ENCODE measurements at regions of chr20 and their contacts with region 1.

Region 1: DNA sequence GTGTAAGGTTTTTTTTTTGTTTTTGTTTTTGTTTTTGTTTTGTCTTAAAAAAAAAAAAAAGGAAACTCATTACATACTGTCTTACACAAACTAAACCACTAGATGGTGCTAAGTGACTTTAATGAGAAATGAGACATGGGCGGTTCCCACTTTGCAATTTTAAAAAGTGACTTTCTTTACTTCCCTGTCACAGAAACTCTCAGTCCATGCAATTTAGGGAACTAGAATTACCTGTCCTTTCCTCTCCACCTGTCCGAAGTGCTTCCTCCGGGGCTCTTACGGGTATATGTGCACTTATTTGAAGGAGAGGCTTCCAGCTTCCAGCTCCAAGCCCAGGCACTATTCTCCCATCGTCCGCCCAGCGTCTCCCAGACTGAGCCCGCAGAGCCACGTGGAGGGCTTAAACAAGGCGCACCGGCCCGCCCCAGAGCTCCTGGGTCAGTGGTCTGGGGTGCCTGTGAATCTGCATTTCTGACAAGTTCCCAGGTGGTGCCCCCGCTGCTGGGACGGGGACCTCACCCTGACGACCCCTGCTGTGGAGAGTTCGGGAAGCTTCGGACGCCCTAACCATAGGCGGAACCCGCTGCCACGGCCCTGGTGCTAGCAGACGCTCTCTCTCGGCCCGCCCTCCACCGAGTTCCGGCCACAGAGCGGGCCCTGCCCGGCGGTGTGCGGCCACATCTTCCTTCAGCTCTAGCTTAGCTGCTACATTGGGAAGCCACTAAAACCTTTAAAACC is 26.1 kb downstream of the BFSP1 start:
- DNase-seq: no peak
- H3K4me3 ChIP-seq: peak overlapping the region; percentile 50
- H3K27me3 ChIP-seq: no peaks in the 10 kb centered on the region
- CTCF ChIP-seq: peak; percentile 54

Region 2: DNA sequence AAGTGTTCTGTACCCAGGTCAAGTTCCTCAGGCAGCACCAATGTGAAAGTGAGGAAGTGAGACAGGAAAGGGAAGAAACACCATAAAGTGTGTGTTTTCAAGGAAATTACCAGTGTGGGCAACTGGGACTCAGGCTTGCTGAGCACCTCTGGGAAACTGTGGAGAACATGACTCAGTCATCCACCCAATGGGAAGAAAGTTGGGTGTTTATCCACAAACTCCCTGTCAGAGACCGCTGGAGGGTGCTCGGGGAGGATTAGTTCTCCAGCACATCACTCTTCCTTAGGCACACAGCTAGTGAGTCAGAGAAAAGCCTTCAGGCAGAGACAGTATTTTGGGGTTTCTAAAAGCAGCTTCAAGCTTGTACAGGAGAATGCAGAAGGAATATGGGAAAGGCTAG is 184.6 kb before region 1 on chr20:
- CTCF ChIA-PET with region 1: no interaction called
- POLR2A ChIA-PET with region 1: no interaction called
- DNase-seq: no peak
- H3K4me3 ChIP-seq: no peak overlapping the region
- H3K27me3 ChIP-seq: no peaks in the 10 kb centered on the region
- CTCF ChIP-seq: no peak

Region 3: DNA sequence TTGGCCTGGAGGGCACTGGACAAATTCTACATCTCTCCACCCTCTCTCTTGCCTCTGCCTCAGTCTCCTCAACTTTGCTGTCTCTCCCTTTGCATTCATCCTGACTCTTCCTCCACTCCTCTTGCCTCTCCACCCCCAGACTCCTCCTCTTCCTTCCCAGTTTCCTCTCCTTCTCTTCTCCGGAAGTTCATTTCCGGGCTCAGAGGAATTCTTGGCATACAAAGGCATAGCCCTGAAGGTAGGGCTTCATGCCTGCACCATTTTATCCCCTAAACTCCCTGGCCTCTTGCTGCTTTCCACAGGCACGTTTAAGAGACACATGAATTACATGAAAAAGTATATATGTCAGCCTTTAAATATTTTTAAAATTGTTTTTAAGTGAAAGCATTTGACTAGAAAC is 15.5 kb after region 1 on chr20:
- CTCF ChIA-PET with region 1: interaction called, 12 read pairs
- POLR2A ChIA-PET with region 1: no interaction called
- DNase-seq: no peak
- H3K4me3 ChIP-seq: no peak overlapping the region
- H3K27me3 ChIP-seq: no peaks in the 10 kb centered on the region; the same call in 1 of the 2 replicates
- CTCF ChIP-seq: no peak

Region 4: DNA sequence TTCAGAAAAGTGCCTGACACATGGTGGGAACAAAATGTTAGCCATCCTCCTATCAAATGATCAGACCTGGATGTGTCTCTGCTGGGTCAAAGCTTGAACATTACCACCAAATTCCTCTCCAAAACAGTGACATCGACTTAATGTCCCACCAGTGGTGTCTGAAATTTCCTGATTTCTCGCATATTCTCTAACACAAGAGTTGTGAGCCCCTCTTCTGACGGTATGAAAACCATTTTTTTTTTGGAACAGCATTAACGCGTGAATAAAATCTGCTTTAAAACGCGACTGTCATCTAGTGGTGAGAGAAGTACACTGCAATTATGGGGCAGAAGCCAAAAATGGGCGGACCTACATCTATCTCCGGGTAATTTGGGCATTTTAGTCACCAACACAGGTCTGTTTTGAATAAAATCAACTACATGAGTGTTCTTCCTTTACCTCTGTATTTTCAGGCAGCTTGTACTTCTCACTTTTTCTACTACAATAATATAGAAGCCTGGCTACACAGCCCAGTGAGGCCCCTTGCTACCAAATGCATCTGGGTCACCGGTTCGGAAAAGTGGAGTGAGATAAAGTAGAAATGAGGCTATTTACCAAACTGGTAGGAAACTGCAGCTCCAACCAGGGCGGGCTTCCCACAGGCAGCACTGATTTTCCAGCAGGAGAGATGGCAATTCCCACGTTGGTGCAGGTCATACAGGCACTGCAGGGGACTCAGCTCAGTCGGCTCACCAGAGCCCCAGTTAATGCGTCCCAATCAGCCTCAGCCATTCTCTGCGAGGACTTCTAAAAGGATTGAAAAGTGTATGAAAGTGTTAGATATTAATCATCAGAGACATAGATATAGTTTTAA is 491.1 kb after region 1 on chr20:
- CTCF ChIA-PET with region 1: interaction called, 23 read pairs
- POLR2A ChIA-PET with region 1: no interaction called
- DNase-seq: peak; percentile 19
- H3K4me3 ChIP-seq: no peak overlapping the region
- H3K27me3 ChIP-seq: peaks cover 3% of the 10 kb centered on the region; the same call in 1 of the 2 replicates
- CTCF ChIP-seq: peak; percentile 97